GM12878 (cell line): ENCODE measurements at regions of chr12 and their contacts with region 1.

Region 1: GRCh38 chr12:68317047-68317667 is 15.0 kb downstream of the MDM1 start:
- DNase-seq: no peak
- ATAC-seq: peak; percentile 51; the same call in 1 of the 3 replicates
- H3K4me3 ChIP-seq: no peak overlapping the region
- H3K27ac ChIP-seq: no peak overlapping the region
- H3K4me1 ChIP-seq: no peaks in the 10 kb centered on the region
- H3K27me3 ChIP-seq: no peaks in the 10 kb centered on the region
- CTCF ChIP-seq: peak; percentile 32 to 65 (median 33); a peak in 4 of 6 replicates
- EP300 ChIP-seq: no peak
- POLR2A ChIP-seq: no peak
- RAD21 ChIP-seq: peak; percentile 85

Region 2: DNA sequence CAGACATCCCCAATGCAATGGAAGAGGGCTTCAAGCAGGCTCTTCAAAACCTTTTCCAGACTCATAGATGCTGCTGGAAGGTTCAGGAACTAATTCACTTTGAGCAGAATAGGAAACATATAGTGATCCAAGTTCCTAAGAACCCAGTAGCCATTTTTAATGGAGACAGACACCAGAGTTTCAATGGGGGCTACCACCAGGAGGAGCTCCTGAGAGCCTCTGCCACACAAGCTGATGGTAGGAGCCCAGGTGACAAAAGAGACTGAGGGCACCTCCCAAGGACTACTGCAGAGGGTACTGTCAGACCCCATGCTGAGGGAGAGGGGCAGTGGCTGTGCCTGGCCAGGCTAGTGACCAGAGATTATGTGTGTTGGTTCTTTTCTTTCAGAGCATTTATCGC is 203.5 kb before region 1 on chr12:
- CTCF ChIA-PET with region 1: interaction called, 10 read pairs
- POLR2A ChIA-PET with region 1: no interaction called
- RAD21 ChIA-PET with region 1: no interaction called
- SMC1A ChIA-PET with region 1: interaction called, 3 read pairs
- in situ Hi-C with region 1: no loop called
- intact Hi-C with region 1: loop called (anchors 5 kb)
- DNase-seq: no peak
- ATAC-seq: peak; percentile 79
- H3K4me3 ChIP-seq: no peak overlapping the region
- H3K27ac ChIP-seq: no peak overlapping the region
- H3K4me1 ChIP-seq: peaks cover 3% of the 10 kb centered on the region; the same call in 1 of the 2 replicates
- H3K27me3 ChIP-seq: no peaks in the 10 kb centered on the region
- CTCF ChIP-seq: peak; percentile 42 to 67 (median 63)
- EP300 ChIP-seq: no peak
- POLR2A ChIP-seq: no peak
- RAD21 ChIP-seq: peak; percentile 38; the same call in 1 of the 2 replicates

Region 3: GRCh38 chr12:68231229-68231628 is 85.9 kb before region 1 on chr12:
- CTCF ChIA-PET with region 1: interaction called, 189 read pairs
- POLR2A ChIA-PET with region 1: no interaction called
- RAD21 ChIA-PET with region 1: interaction called, 72 read pairs
- SMC1A ChIA-PET with region 1: interaction called, 147 read pairs
- in situ Hi-C with region 1: loop called (anchors 5 kb)
- intact Hi-C with region 1: no loop called
- DNase-seq: no peak
- ATAC-seq: peak; percentile 70
- H3K4me3 ChIP-seq: no peak overlapping the region
- H3K27ac ChIP-seq: no peak overlapping the region
- H3K4me1 ChIP-seq: peaks cover 2% of the 10 kb centered on the region; the same call in 1 of the 2 replicates
- H3K27me3 ChIP-seq: no peaks in the 10 kb centered on the region
- CTCF ChIP-seq: no peak
- EP300 ChIP-seq: no peak
- POLR2A ChIP-seq: no peak
- RAD21 ChIP-seq: no peak

Region 4: GRCh38 chr12:68259318-68259940 is 57.7 kb before region 1 on chr12:
- CTCF ChIA-PET with region 1: no interaction called
- POLR2A ChIA-PET with region 1: no interaction called
- RAD21 ChIA-PET with region 1: interaction called, 3 read pairs
- SMC1A ChIA-PET with region 1: interaction called, 11 read pairs
- in situ Hi-C with region 1: no loop called
- intact Hi-C with region 1: no loop called
- DNase-seq: peak; percentile 24
- ATAC-seq: peak; percentile 63
- H3K4me3 ChIP-seq: no peak overlapping the region
- H3K27ac ChIP-seq: no peak overlapping the region
- H3K4me1 ChIP-seq: peaks cover 10% of the 10 kb centered on the region
- H3K27me3 ChIP-seq: no peaks in the 10 kb centered on the region
- CTCF ChIP-seq: no peak
- EP300 ChIP-seq: no peak
- POLR2A ChIP-seq: no peak
- RAD21 ChIP-seq: no peak

Region 5: GRCh38 chr12:68290126-68290525 is 27.0 kb before region 1 on chr12:
- CTCF ChIA-PET with region 1: interaction called, 18 read pairs
- POLR2A ChIA-PET with region 1: no interaction called
- RAD21 ChIA-PET with region 1: interaction called, 3 read pairs
- SMC1A ChIA-PET with region 1: interaction called, 8 read pairs
- in situ Hi-C with region 1: no loop called
- intact Hi-C with region 1: no loop called
- DNase-seq: peak; percentile 93
- ATAC-seq: peak; percentile 100
- H3K4me3 ChIP-seq: no peak overlapping the region
- H3K27ac ChIP-seq: no peak overlapping the region
- H3K4me1 ChIP-seq: peaks cover 7% of the 10 kb centered on the region
- H3K27me3 ChIP-seq: no peaks in the 10 kb centered on the region
- CTCF ChIP-seq: no peak
- EP300 ChIP-seq: peak; percentile 94 to 96
- POLR2A ChIP-seq: no peak
- RAD21 ChIP-seq: no peak

Region 6: DNA sequence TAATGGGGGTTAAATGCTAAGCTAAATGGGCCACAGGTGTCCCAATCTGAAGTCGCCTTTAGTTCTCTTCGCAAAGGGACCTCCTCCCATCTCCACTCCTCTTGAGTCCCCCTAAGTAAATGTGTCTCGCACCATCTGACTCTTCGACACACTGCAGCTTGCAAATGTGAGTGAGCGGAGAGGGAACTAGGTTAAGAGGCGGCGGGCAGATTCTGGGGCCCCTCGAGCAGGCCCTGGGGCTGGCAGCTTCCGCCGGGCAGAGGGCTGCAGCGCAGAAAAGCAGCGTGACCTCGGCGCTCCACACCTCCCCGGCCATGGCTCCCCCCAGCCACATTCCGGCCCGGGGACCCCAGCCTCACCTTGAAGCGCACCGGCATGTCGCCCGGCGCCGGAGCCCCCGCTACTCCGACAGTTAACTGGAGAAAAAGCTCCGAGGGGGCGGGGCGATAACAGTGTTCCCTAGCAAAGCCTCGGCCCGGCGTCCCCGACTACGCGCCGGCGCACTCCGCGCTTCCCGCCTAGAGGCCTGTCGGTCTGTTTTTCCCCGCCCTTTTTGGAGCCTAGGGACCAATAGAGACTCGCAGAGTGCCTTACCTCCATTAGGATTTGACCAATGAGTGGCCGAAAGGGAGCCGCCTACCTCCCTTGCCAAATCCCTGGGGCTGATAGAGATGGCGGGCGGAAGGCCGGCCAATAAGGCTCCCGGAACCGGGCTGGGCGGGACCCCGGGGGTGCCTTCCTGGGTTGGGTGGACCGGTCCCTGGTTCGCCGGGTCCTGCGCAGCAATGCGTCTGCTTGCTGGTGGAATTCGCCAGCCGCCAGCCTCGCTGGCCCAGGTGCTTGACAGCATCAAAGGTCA is 14.9 kb after region 1 on chr12 and contains the start of gene MDM1:
- CTCF ChIA-PET with region 1: interaction called, 54 read pairs
- POLR2A ChIA-PET with region 1: no interaction called
- RAD21 ChIA-PET with region 1: interaction called, 8 read pairs
- SMC1A ChIA-PET with region 1: interaction called, 16 read pairs
- in situ Hi-C with region 1: no loop called
- intact Hi-C with region 1: no loop called
- DNase-seq: peak; percentile 92
- ATAC-seq: peak; percentile 98
- H3K4me3 ChIP-seq: peak within 1 kb of the TSS; percentile 83
- H3K27ac ChIP-seq: peak within 1 kb of the TSS; percentile 57
- H3K4me1 ChIP-seq: no peaks in the 10 kb centered on the region
- H3K27me3 ChIP-seq: no peaks in the 10 kb centered on the region
- CTCF ChIP-seq: no peak
- EP300 ChIP-seq: no peak
- POLR2A ChIP-seq: peak; percentile 82
- RAD21 ChIP-seq: no peak
- polyA plus RNA-seq, gene MDM1: 10.1 to 10.6 TPM